ENCODE measurements at regions of chr17 and their contacts with region 1.

Region 1: GRCh38 chr17:62703775-62704378 is 76.4 kb downstream of the MRC2 start:
- DNase-seq: peak; percentile 64
- H3K4me3 ChIP-seq: peak overlapping the region; percentile 61 to 75
- H3K27ac ChIP-seq: peak overlapping the region; percentile 55 to 79
- H3K4me1 ChIP-seq: peaks cover 5% of the 10 kb centered on the region
- H3K27me3 ChIP-seq: no peaks in the 10 kb centered on the region
- CTCF ChIP-seq: peak; percentile 58 to 94 (median 88)
- POLR2A ChIP-seq: no peak

Region 2: DNA sequence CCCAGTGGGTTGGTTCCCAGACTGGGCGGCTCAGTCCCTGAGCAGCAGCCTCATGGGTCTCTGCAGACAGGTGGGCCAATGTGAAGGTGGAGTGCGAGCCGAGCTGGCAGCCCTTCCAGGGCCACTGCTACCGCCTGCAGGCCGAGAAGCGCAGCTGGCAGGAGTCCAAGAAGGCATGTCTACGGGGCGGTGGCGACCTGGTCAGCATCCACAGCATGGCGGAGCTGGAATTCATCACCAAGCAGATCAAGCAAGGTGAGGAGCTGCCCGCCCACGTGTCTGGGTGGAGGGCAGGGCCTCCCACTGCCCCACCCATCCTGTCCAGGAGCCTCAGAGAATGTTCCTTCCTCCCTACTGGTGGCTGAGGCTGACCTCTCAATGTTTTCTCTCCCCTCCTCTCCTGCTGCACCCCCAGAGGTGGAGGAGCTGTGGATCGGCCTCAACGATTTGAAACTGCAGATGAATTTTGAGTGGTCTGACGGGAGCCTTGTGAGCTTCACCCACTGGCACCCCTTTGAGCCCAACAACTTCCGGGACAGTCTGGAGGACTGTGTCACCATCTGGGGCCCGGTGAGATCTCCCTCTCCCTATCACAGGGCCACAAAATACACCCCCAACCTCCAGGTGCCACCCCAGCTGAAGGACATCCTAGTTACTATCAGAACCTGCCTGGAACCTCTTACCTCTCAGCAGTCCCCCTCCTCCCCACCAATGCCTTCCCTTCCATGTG is 32.1 kb before region 1 on chr17:
- intact Hi-C with region 1: no loop called
- DNase-seq: peak; percentile 58
- H3K4me3 ChIP-seq: no peak overlapping the region
- H3K27ac ChIP-seq: peak overlapping the region in 1 of 2 donors; percentile 40
- H3K4me1 ChIP-seq: no peaks in the 10 kb centered on the region
- H3K27me3 ChIP-seq: no peaks in the 10 kb centered on the region
- CTCF ChIP-seq: peak in 3 of 4 experiments; percentile 5 to 41 (median 21)
- POLR2A ChIP-seq: no peak

Region 3: GRCh38 chr17:62819475-62820212 is 115.8 kb after region 1 on chr17:
- intact Hi-C with region 1: loop called (anchors 10 kb)
- DNase-seq: peak; percentile 85
- H3K4me3 ChIP-seq: no peak overlapping the region
- H3K27ac ChIP-seq: peak overlapping the region; percentile 32 to 64
- H3K4me1 ChIP-seq: no peaks in the 10 kb centered on the region
- H3K27me3 ChIP-seq: no peaks in the 10 kb centered on the region
- CTCF ChIP-seq: no peak
- POLR2A ChIP-seq: no peak

Region 4: GRCh38 chr17:62840860-62841259 is 137.0 kb after region 1 on chr17:
- intact Hi-C with region 1: no loop called
- DNase-seq: no peak
- H3K4me3 ChIP-seq: no peak overlapping the region
- H3K27ac ChIP-seq: no peak overlapping the region
- H3K4me1 ChIP-seq: no peaks in the 10 kb centered on the region
- H3K27me3 ChIP-seq: no peaks in the 10 kb centered on the region
- CTCF ChIP-seq: no peak
- POLR2A ChIP-seq: no peak

Region 5: GRCh38 chr17:62968445-62968923 is 264.6 kb after region 1 on chr17:
- intact Hi-C with region 1: loop called (anchors 2 kb)
- DNase-seq: peak; percentile 66
- H3K4me3 ChIP-seq: no peak overlapping the region
- H3K27ac ChIP-seq: no peak overlapping the region
- H3K4me1 ChIP-seq: no peaks in the 10 kb centered on the region
- H3K27me3 ChIP-seq: no peaks in the 10 kb centered on the region
- CTCF ChIP-seq: peak in 3 of 4 experiments; percentile 84 to 94 (median 91)
- POLR2A ChIP-seq: no peak

Region 6: DNA sequence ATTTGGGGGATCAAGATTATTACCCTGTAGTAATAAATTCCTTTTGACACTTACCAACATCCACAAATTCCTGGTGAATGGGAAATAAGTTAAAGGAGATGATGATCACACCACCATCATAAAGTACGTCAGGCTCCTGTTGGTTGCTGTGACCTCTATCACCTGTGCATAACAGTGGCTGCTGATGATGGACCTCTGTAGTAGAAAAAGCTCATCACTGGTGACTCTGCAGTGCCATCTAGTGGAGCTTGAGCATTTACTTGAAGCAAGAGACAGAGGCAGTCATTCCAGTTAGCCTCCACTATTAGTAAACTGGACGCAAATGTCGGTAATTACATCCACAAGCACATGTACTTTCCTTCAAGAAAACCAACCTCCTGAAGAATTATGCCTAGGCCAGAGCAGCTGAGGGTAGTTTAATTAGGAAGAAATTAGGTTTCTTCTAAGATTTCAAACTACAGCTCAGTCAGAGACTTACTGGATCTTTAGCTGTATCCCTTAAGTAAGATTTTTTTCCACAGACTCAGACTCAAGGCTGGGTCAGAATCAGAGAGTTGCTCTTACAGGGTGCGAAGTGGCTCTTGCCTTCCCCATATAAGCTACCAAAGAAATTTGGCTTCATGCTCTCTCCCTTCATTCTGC is 702.9 kb after region 1 on chr17:
- intact Hi-C with region 1: loop called (anchors 5 kb)
- DNase-seq: peak; percentile 85
- H3K4me3 ChIP-seq: no peak overlapping the region
- H3K27ac ChIP-seq: no peak overlapping the region
- H3K4me1 ChIP-seq: no peaks in the 10 kb centered on the region
- H3K27me3 ChIP-seq: no peaks in the 10 kb centered on the region
- CTCF ChIP-seq: peak; percentile 46 to 86 (median 78)
- POLR2A ChIP-seq: no peak

Measured in prostate gland (tissue), 2 donors.